ENCODE measurements at regions of chr19 and their contacts with region 1.

Region 1: DNA sequence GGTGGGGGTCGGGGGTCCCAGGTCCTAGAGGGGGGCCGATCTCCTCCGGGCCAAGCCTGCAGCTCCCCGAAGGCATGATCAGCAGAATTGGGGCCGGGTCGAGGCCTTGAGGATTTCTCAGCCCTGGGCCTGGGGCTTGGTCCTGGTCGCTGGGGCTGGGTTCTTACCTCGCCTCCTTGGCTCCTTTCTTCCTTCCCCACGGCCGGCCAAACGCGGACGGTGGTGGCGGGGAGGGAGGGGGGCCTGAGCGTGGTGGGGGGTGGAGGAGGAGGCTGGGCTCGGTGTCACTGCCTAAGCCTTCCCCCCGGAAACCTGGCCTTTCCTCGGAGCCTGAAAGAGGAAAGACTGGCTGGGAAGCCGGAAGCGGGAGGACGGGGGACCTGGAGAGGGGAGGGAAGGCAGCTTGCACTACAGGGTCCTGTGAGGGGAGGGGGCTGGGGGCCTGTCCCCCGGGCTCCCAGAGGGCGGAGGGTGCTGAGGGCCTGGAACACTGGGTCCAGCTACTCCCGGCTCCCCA is at the start of gene ZNF579:
- DNase-seq: peak; percentile 32 to 89
- H3K4me3 ChIP-seq: peak within 1 kb of the TSS; percentile 67 to 85
- H3K27ac ChIP-seq: peak within 1 kb of the TSS; percentile 89 to 92
- H3K4me1 ChIP-seq: peaks cover 2 to 8% of the 10 kb centered on the region in 2 donors
- H3K27me3 ChIP-seq: no peaks in the 10 kb centered on the region
- CTCF ChIP-seq: no peak
- total RNA-seq, gene ZNF579: 14.2 TPM

Region 2: GRCh38 chr19:55312621-55313512 is 267.8 kb before region 1 on chr19:
- intact Hi-C with region 1: no loop called
- DNase-seq: no peak
- H3K4me3 ChIP-seq: no peak overlapping the region
- H3K27ac ChIP-seq: no peak overlapping the region
- H3K4me1 ChIP-seq: no peaks in the 10 kb centered on the region
- H3K27me3 ChIP-seq: no peaks in the 10 kb centered on the region
- CTCF ChIP-seq: no peak

Region 3: DNA sequence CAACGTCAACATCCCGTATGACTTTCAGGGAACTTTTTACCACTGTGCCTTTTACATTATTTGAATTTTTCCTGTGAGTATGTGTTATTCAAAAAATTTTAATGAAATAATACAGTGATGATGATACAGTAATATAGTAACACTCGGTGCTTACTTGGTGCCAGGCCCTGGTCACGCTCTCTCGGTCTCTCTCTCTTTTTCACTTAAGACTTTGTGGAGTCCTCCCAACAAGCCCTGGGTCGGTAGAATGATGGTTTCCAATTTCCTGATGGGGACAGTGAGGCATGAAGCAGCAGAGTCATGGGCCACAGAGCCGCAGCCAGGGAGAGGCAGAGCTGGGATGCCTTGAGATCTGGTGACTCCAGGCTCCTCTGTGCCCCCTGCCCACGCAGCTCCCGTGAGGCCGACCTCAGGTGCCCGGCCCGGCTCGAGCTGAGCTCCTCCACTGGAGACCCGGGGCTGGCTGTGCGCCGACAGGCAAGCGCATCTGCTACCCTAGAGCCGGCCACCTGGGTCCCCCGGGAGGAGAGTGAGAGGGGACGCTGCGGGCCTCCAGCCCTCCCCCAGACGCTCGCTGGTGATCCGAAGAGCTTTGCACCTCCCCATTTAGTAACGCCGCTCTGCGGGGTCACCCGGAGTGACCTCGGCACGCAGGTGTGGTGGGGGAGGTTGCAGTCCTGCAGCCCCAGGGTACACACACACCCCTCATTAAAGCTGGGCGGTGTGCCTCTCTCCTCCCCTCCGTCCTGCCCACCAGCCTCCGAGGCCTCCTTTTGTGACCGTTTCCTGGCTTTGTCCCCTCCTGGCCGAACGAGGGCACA is 31.0 kb before region 1 on chr19:
- intact Hi-C with region 1: loop called (anchors 1 kb)
- DNase-seq: peak in 1 of 2 donors; percentile 77
- H3K4me3 ChIP-seq: peak overlapping the region; percentile 30 to 45
- H3K27ac ChIP-seq: peak overlapping the region; percentile 61 to 70
- H3K4me1 ChIP-seq: peaks cover 5 to 33% of the 10 kb centered on the region in 2 donors
- H3K27me3 ChIP-seq: no peaks in the 10 kb centered on the region
- CTCF ChIP-seq: no peak

Region 4: GRCh38 chr19:55563261-55563690 is 17.4 kb before region 1 on chr19:
- intact Hi-C with region 1: no loop called
- DNase-seq: no peak
- H3K4me3 ChIP-seq: no peak overlapping the region
- H3K27ac ChIP-seq: no peak overlapping the region
- H3K4me1 ChIP-seq: no peaks in the 10 kb centered on the region
- H3K27me3 ChIP-seq: no peaks in the 10 kb centered on the region
- CTCF ChIP-seq: no peak

Region 5: DNA sequence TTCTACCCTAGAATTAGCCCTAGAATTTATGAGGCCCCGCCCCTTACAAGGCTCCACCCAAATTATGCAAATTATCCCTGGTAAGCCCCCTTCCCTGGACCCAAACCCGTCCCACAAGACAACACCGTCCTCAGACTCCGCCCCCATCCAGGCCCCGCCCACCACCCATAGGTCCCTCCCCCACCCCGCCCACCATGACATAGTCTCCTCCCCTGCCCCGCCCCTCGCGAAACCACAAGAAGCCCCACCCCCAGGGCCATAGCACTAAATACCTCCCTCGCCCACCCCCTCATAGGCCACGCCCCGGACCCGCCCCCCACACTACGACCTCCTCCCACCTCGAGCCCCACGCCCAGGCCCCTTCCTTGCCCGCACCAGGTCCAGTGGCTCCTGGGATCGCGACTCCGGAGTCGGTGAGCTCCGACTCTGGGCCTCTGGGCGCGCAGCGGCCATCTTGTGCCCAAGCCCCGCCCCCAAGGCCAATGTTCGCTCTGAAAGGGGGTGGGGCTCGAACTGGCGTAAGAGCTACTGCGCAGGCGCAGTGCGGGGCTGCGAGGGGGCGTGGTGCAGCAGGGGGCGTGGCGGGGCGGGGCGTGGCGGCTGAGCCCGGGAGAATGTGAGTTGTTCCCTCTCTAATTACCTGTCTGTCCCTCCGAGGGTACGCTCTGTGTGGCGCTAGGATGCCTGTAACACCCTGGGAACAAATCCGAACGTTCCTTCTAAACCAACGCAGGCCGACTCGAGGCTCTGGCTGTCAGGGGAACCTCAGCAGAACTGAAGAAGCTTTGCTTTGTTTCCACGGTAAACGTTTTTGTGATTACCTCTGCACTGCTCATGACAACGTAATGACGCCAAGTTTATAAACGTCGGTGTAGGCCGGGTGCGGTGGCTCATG is 43.7 kb after region 1 on chr19 and contains the start of gene ZNF784:
- intact Hi-C with region 1: loop called (anchors 2 kb)
- DNase-seq: peak; percentile 67 to 95
- H3K4me3 ChIP-seq: peak within 1 kb of the TSS; percentile 60 to 73
- H3K27ac ChIP-seq: peak within 1 kb of the TSS; percentile 96 to 97
- H3K4me1 ChIP-seq: peaks cover 0 to 5% of the 10 kb centered on the region in 2 donors
- H3K27me3 ChIP-seq: no peaks in the 10 kb centered on the region
- CTCF ChIP-seq: no peak
- total RNA-seq, gene ZNF784: 14.7 TPM

Region 6: GRCh38 chr19:55632463-55632834 is 51.8 kb after region 1 on chr19:
- intact Hi-C with region 1: loop called (anchors 2 kb)
- DNase-seq: peak; percentile 59 to 98
- H3K4me3 ChIP-seq: no peak overlapping the region
- H3K27ac ChIP-seq: peak overlapping the region in 1 of 2 donors; percentile 44
- H3K4me1 ChIP-seq: peaks cover 11 to 19% of the 10 kb centered on the region in 2 donors
- H3K27me3 ChIP-seq: no peaks in the 10 kb centered on the region
- CTCF ChIP-seq: peak; percentile 82 to 90 (median 83)

Measured in ascending aorta (tissue), 2 donors.